Activated CD4-positive, alpha-beta memory T cell treated with anti-CD3 and anti-CD28 coated beads, Interleukin-2, amount 10 ng/mL, durations not matched to agents 7 days and 5 days (primary cell): ENCODE measurements at regions of chr11 and their contacts with region 1.

Region 1: GRCh38 chr11:62081378-62082291 is 42.2 kb upstream of the INCENP start:
- DNase-seq: peak; percentile 83
- H3K4me3 Mint-ChIP-seq: no peak overlapping the region
- H3K27ac Mint-ChIP-seq: no peak overlapping the region
- H3K4me1 Mint-ChIP-seq: peaks cover 8% of the 10 kb centered on the region
- H3K27me3 Mint-ChIP-seq: no peaks in the 10 kb centered on the region

Region 2: GRCh38 chr11:61871158-61871597 is 210.5 kb before region 1 on chr11:
- CTCF ChIA-PET with region 1: interaction called, 17 read pairs
- POLR2A ChIA-PET with region 1: no interaction called
- DNase-seq: peak; percentile 71
- H3K4me3 Mint-ChIP-seq: no peak overlapping the region
- H3K27ac Mint-ChIP-seq: no peak overlapping the region
- H3K4me1 Mint-ChIP-seq: peaks cover 5% of the 10 kb centered on the region
- H3K27me3 Mint-ChIP-seq: peaks cover 2% of the 10 kb centered on the region

Region 3: DNA sequence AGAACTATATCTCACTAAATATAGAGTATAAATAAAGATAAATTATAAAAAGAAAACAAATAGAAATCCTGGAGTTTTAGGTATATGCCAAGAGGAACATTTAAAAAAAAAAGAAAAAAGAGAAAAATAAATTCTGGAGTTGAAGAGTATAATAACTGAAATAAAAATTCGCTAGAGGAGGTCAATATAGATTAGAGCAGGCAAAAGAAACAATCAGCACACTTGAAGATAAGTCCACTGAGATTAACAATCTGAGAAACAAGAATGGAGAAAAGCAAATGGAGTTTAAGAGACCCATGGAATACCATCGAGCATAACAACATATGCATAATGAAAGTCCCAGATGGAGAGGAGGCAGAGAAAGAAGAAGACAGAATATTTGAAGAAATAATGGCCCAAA is 145.8 kb before region 1 on chr11:
- CTCF ChIA-PET with region 1: interaction called, 11 read pairs
- POLR2A ChIA-PET with region 1: no interaction called
- DNase-seq: no peak
- H3K4me3 Mint-ChIP-seq: no peak overlapping the region
- H3K27ac Mint-ChIP-seq: no peak overlapping the region
- H3K4me1 Mint-ChIP-seq: no peaks in the 10 kb centered on the region
- H3K27me3 Mint-ChIP-seq: peaks cover 35% of the 10 kb centered on the region

Region 4: DNA sequence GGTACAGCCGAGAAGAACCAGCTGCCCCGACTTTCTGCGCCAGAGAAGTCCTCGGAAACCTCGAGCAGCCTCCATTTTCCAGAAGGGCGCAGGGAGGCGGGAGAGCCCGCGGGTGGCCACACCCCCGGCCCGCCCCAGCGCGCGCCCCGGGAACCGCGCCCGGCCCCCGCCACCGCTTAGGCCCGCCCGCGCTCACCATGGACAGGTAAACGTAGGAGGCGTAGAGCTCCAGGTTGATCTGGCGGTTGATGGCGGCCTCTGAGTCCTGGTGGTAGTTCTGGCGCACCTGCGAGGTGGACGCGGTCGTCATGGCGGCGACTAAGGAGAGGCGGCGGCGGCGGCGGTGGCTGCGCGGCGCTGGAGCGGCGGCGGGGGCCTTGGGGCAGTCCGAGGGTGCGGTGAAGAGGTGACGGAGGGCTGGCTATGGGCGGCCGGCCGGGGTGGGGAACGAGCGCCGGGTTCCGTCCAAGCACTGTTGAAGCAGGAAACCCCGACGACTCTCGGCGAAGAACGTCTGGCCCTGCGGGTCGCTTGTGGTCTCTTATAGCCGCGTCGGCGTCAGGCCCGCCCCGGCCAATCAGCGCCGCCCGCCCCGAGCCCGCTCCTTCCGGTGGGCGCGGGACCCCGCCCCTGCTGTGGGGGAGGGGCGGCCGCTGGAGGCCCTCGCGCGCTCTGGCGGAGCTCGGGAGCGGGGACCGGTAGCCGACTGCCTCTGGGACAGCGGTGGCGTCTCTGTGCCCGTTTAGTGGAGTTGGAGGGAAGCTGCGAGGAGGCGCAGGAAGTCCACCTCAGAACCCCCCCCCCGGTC is 114.3 kb before region 1 on chr11 and contains the start of gene FTH1:
- CTCF ChIA-PET with region 1: interaction called, 65 read pairs
- POLR2A ChIA-PET with region 1: interaction called, 18 read pairs
- DNase-seq: peak; percentile 90
- H3K4me3 Mint-ChIP-seq: peak within 1 kb of the TSS; percentile 92
- H3K27ac Mint-ChIP-seq: peak within 1 kb of the TSS; percentile 94
- H3K4me1 Mint-ChIP-seq: peaks cover 67% of the 10 kb centered on the region
- H3K27me3 Mint-ChIP-seq: no peaks in the 10 kb centered on the region
- total RNA-seq, gene FTH1: 1,164 to 1,189 TPM

Region 5: GRCh38 chr11:62025487-62026105 is 56.0 kb before region 1 on chr11:
- CTCF ChIA-PET with region 1: interaction called, 20 read pairs
- POLR2A ChIA-PET with region 1: no interaction called
- DNase-seq: peak; percentile 89
- H3K4me3 Mint-ChIP-seq: peak overlapping the region; percentile 45
- H3K27ac Mint-ChIP-seq: peak overlapping the region; percentile 99
- H3K4me1 Mint-ChIP-seq: peaks cover 24% of the 10 kb centered on the region
- H3K27me3 Mint-ChIP-seq: no peaks in the 10 kb centered on the region

Region 6: DNA sequence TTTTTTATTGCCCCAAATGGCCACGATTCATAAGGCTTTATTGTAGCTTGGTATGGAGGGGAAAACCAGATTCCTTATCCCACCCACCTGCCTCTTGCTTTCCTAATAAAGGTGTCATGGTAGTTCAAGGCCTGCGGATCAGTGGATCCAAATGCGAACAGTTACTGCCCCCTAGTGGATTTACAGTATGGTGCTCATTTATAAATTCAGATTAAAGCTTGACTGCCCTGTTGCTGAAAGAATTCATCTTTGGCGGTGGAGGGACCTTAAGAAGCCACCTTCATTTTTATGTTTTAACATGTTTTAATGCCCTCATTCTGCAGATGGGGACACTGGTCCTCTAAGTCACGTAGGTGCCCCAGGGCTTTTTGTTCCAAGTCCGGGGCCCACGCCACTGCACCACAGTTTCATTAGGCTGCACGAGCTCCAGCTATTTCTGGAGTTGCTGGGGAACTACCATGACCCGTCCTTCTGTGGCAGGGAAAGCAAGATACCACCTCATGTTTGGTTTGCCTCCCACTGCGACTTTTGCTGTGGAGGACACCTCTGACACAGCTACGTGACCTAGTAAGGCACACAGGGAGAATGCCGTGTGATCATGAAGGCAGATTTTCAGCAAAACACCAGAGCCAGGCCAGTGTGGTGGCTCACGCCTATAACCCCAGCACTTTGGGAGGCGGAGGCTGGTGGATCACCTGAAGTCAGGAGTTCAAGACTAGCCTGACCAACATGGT is 26.5 kb after region 1 on chr11:
- CTCF ChIA-PET with region 1: interaction called, 84 read pairs
- POLR2A ChIA-PET with region 1: no interaction called
- DNase-seq: peak; percentile 40
- H3K4me3 Mint-ChIP-seq: no peak overlapping the region
- H3K27ac Mint-ChIP-seq: no peak overlapping the region
- H3K4me1 Mint-ChIP-seq: peaks cover 18% of the 10 kb centered on the region
- H3K27me3 Mint-ChIP-seq: peaks cover 2% of the 10 kb centered on the region

Region 7: DNA sequence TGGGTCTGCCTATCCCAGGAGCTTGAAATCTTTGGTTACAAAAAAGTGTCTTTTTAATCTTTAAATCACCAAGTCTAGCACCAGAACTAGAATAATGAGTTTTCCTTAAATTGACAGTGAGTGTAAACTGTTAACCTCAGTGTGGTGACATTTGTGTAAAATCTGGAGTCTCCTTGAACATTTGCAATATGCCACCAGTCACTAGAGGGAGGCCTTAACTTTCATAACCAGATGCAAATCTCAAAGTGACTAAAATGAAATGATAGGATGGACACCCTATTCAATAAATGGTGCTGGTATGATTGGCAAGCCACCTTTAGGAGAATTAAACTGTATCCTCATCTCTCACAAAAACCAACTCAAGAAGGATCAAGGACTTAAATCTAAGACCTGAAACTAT is 152.1 kb after region 1 on chr11:
- CTCF ChIA-PET with region 1: no interaction called
- POLR2A ChIA-PET with region 1: no interaction called
- DNase-seq: no peak
- H3K4me3 Mint-ChIP-seq: no peak overlapping the region
- H3K27ac Mint-ChIP-seq: no peak overlapping the region
- H3K4me1 Mint-ChIP-seq: no peaks in the 10 kb centered on the region
- H3K27me3 Mint-ChIP-seq: peaks cover 53% of the 10 kb centered on the region

Region 8: GRCh38 chr11:62514151-62514550 is 432.5 kb after region 1 on chr11:
- CTCF ChIA-PET with region 1: no interaction called
- POLR2A ChIA-PET with region 1: no interaction called
- DNase-seq: no peak
- H3K4me3 Mint-ChIP-seq: no peak overlapping the region
- H3K27ac Mint-ChIP-seq: no peak overlapping the region
- H3K4me1 Mint-ChIP-seq: peaks cover 3% of the 10 kb centered on the region
- H3K27me3 Mint-ChIP-seq: no peaks in the 10 kb centered on the region